Aorta (tissue), 5 donors: ENCODE measurements at regions of chr1 and their contacts with region 1.

Region 1: DNA sequence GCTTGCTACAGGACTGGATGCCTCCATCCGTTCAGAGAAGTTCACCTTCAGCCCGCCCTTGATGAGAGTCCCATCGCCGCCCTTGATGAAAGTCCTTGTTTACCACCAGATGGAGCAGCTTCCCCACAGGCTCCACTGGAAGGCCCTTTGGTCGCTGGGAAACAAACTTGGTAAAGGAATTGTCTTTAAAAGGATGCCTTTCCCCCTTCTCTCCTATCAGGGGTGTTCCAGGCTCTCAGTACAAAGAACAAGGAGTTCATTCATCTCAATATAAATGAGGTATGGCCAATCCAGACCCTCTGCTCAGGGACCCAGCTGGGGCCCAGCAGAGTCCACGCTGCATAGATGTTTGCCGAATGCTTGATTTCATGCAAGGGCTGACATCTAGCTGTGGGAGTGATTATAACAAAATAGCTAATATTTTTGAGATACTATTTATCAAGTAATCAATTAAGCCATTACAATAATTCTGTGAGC is 50.8 kb downstream of the CAPN9 start:
- DNase-seq: peak in 1 of 2 donors; percentile 70
- ATAC-seq: peak; percentile 83
- H3K4me3 ChIP-seq: no peak overlapping the region
- H3K27ac ChIP-seq: no peak overlapping the region
- H3K4me1 ChIP-seq: no peaks in the 10 kb centered on the region
- H3K27me3 ChIP-seq: no peaks in the 10 kb centered on the region

Region 2: GRCh38 chr1:230917284-230918135 is 119.5 kb after region 1 on chr1:
- intact Hi-C with region 1: loop called (anchors 1 kb)
- DNase-seq: peak; percentile 78 to 83
- ATAC-seq: peak; percentile 66
- H3K4me3 ChIP-seq: no peak overlapping the region
- H3K27ac ChIP-seq: no peak overlapping the region
- H3K4me1 ChIP-seq: no peaks in the 10 kb centered on the region
- H3K27me3 ChIP-seq: no peaks in the 10 kb centered on the region

Region 3: DNA sequence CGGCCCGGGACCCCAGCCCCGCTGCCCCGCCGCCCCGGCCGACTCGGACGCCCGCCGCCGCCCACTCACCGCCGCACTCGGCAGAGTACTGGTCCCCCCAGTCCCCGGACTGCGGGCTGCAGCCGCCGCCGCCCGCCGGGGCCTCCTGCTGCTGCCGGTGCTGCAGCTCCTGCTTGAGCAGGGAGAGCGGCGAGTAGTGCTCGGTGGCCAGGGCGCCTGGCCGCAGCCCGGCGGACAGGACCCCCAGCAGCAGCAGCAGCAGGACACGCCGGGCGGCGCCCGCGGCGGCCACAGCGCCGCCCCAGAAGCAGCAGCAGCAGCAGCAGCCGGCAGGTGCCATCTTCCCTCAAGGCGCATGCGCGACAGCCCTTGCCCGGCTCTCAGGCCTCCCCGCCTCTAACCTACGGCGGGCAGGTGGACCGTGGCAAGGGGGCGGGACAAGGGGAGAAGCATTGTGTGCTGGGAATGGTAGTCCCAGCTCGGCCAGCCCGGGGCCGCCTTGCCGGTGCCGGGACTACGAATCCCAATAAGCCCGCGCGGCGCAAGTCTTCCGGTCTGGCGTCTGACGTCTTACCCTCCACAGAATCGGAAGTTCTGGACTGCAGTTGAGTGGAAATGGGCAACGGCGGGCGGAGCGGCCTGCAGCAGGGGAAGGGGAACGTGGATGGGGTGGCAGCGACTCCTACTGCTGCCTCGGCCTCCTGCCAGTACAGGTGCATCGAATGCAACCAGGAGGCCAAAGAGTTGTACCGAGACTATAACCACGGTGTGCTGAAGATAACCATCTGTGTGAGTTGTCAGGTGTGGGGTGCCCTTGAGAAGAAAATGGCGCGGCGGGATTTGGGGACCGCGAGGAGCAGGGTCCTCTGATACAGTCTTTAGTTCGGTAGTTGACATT is 180.8 kb after region 1 on chr1 and contains the starts of genes ARV1 and TTC13:
- intact Hi-C with region 1: loop called in 1 of 2 experiments (anchors 5 kb)
- DNase-seq: peak; percentile 99 to 100
- ATAC-seq: peak; percentile 100
- H3K4me3 ChIP-seq: peak within 1 kb of the TSS; percentile 76 to 89
- H3K27ac ChIP-seq: peak within 1 kb of the TSS in 1 of 2 donors; percentile 5
- H3K4me1 ChIP-seq: peaks cover 0 to 6% of the 10 kb centered on the region in 2 donors
- H3K27me3 ChIP-seq: no peaks in the 10 kb centered on the region
- total RNA-seq, gene ARV1: 10.7 to 12.2 TPM
- total RNA-seq, gene TTC13: 19.3 to 22.6 TPM